ENCODE measurements at regions of chr11 and their contacts with region 1.

Region 1: DNA sequence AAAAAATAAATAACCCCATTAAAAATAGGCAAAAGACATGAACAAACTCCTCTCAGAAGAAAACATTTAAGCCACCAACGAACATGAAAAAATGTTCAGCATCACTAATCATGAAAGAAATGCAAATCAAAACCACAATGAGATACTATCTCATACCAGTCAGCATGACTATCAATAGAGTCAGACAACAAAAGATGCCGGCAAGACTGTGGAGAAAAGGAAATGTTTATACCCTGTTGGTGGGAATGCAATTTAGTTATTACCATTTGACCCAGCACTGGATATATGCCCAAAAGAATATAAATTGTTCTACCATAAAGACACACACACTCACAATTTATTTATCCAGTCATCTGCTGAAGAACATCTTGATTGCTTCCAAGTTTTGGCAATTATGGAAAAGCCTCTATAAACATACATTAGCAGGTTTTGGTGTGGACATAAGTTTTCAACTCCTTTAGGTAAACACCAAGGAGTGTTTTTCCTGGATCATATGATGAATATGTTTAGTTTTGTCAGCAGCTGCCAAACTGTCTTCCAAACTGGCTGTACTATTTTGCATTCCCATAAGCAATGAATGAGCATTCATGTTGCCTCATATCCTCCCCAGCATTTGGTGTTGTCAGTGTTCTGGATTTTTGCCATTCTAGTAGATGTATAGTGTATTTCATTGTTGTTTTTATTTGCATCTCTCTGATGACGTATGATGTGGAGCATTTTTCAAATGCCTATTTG is 28.0 kb downstream of the OR8D1 start:
- DNase-seq: no peak
- ATAC-seq: no peak
- H3K4me3 ChIP-seq: no peak overlapping the region
- H3K27ac ChIP-seq: no peak overlapping the region
- H3K4me1 ChIP-seq: no peaks in the 10 kb centered on the region
- H3K27me3 ChIP-seq: no peaks in the 10 kb centered on the region

Region 2: GRCh38 chr11:123801765-123802164 is 484.0 kb before region 1 on chr11:
- intact Hi-C with region 1: no loop called
- DNase-seq: no peak
- ATAC-seq: no peak
- H3K4me3 ChIP-seq: no peak overlapping the region
- H3K27ac ChIP-seq: no peak overlapping the region
- H3K4me1 ChIP-seq: peaks cover 1% of the 10 kb centered on the region
- H3K27me3 ChIP-seq: no peaks in the 10 kb centered on the region

Region 3: GRCh38 chr11:124233410-124233809 is 52.4 kb before region 1 on chr11:
- intact Hi-C with region 1: no loop called
- DNase-seq: no peak
- ATAC-seq: no peak
- H3K4me3 ChIP-seq: no peak overlapping the region
- H3K27ac ChIP-seq: no peak overlapping the region
- H3K4me1 ChIP-seq: no peaks in the 10 kb centered on the region
- H3K27me3 ChIP-seq: no peaks in the 10 kb centered on the region

Region 4: GRCh38 chr11:124329787-124330478 is 44.2 kb after region 1 on chr11:
- intact Hi-C with region 1: loop called in 1 of 4 experiments (anchors 10 kb)
- DNase-seq: no peak
- ATAC-seq: no peak
- H3K4me3 ChIP-seq: no peak overlapping the region
- H3K27ac ChIP-seq: no peak overlapping the region
- H3K4me1 ChIP-seq: no peaks in the 10 kb centered on the region
- H3K27me3 ChIP-seq: peaks cover 2% of the 10 kb centered on the region

Region 5: GRCh38 chr11:124934862-124935547 is 649.2 kb after region 1 on chr11:
- intact Hi-C with region 1: no loop called
- DNase-seq: no peak
- ATAC-seq: no peak
- H3K4me3 ChIP-seq: no peak overlapping the region
- H3K27ac ChIP-seq: no peak overlapping the region
- H3K4me1 ChIP-seq: no peaks in the 10 kb centered on the region
- H3K27me3 ChIP-seq: no peaks in the 10 kb centered on the region

Region 6: GRCh38 chr11:125923012-125923579 is 1637.3 kb after region 1 on chr11:
- intact Hi-C with region 1: no loop called
- DNase-seq: peak; percentile 53 to 79 (median 67)
- ATAC-seq: peak; percentile 62 to 83
- H3K4me3 ChIP-seq: no peak overlapping the region
- H3K27ac ChIP-seq: no peak overlapping the region
- H3K4me1 ChIP-seq: no peaks in the 10 kb centered on the region
- H3K27me3 ChIP-seq: no peaks in the 10 kb centered on the region